Activated T-helper 2 cell treated with anti-CD3 and anti-CD28 coated beads, Interferon-gamma antibody, Interleukin-2, Interleukin-4, amounts not matched to agents 10 μg/mL and 5 μg/mL and 100 μg/mL, durations not matched to agents 14 hours and 24 hours and 36 hours (primary cell): ENCODE measurements at regions of chr5 and their contacts with region 1.

Region 1: DNA sequence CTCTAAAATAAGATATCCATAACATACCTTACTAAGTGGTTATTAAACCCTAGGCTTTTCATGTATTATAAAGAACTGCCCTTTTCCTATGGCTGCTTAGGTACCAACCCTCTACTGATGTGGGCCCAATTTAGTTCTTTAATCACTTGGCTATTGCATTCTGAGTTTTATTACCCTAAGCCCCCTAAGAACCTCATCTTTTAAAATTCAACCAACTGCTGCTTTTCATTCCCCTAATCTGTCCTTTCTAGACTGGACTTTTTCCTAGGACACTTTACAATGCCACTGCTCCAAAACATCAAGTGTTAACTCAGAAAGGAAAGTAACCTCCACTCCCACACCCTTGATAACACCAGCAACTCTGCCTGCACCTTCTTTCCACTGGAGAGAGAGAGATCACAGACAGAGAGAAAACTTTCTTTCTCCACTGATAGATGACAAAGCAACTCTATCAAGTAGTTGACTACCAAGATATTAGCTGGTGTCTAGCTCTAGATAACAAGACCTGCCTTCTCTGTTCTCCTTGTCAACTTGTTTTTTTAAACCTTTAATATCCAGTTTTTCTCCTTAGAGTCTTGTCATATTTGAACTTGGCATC is 27.3 kb downstream of the ELL2 start:
- DNase-seq: no peak
- H3K4me3 Mint-ChIP-seq: no peak overlapping the region
- H3K27ac Mint-ChIP-seq: peak overlapping the region; percentile 24
- H3K4me1 Mint-ChIP-seq: peaks cover 44% of the 10 kb centered on the region
- H3K27me3 Mint-ChIP-seq: no peaks in the 10 kb centered on the region

Region 2: GRCh38 chr5:95892780-95893354 is 41.4 kb before region 1 on chr5:
- intact Hi-C with region 1: no loop called
- DNase-seq: no peak
- H3K4me3 Mint-ChIP-seq: no peak overlapping the region
- H3K27ac Mint-ChIP-seq: no peak overlapping the region
- H3K4me1 Mint-ChIP-seq: peaks cover 17% of the 10 kb centered on the region
- H3K27me3 Mint-ChIP-seq: no peaks in the 10 kb centered on the region

Region 3: GRCh38 chr5:95949810-95950209 is 15.5 kb after region 1 on chr5:
- intact Hi-C with region 1: loop called (anchors 2 kb)
- DNase-seq: no peak
- H3K4me3 Mint-ChIP-seq: peak overlapping the region; percentile 6
- H3K27ac Mint-ChIP-seq: peak overlapping the region; percentile 9
- H3K4me1 Mint-ChIP-seq: peaks cover 62% of the 10 kb centered on the region
- H3K27me3 Mint-ChIP-seq: no peaks in the 10 kb centered on the region

Region 4: DNA sequence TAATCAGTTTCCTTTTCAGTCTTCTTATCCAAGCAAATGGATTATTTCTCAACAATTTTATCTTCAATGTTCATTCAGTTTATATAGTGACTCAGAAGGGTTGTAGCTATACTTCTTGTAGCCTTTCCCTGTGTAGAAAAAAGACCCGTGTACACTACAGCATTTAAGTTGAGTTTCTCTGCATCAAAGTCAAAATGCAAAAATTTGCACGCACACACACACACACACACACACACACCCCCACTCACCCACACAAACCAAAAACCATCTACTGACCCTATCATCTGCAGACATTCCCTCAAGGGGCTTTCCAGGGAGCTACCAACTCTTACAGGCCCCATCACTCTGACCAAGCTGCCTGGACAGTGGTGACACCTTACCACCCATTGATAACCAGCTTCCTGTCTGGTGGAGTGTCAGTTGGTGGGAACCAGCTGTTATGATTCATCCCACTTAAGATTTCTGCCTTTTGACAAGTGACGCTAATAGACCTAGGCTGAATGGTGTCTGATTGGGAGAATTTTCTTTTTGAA is 39.6 kb after region 1 on chr5:
- intact Hi-C with region 1: no loop called
- DNase-seq: no peak
- H3K4me3 Mint-ChIP-seq: no peak overlapping the region
- H3K27ac Mint-ChIP-seq: peak overlapping the region; percentile 64
- H3K4me1 Mint-ChIP-seq: peaks cover 11% of the 10 kb centered on the region
- H3K27me3 Mint-ChIP-seq: no peaks in the 10 kb centered on the region